Activated CD4-positive, alpha-beta memory T cell treated with anti-CD3 and anti-CD28 coated beads for 36 hours (primary cell): ENCODE measurements at regions of chr2 and their contacts with region 1.

Region 1: GRCh38 chr2:127387655-127388422 is at the start of gene MAP3K2:
- DNase-seq: peak; percentile 93
- H3K4me3 Mint-ChIP-seq: peak within 1 kb of the TSS; percentile 88
- H3K27ac Mint-ChIP-seq: peak within 1 kb of the TSS; percentile 96
- H3K4me1 Mint-ChIP-seq: peaks cover 72% of the 10 kb centered on the region
- H3K27me3 Mint-ChIP-seq: no peaks in the 10 kb centered on the region
- total RNA-seq, gene MAP3K2: 33.4 to 34.9 TPM

Region 2: GRCh38 chr2:127226520-127227263 is 161.1 kb before region 1 on chr2:
- CTCF ChIA-PET with region 1: no interaction called
- POLR2A ChIA-PET with region 1: no interaction called
- intact Hi-C with region 1: loop called (anchors 2 kb)
- DNase-seq: peak; percentile 87
- H3K4me3 Mint-ChIP-seq: peak overlapping the region; percentile 53
- H3K27ac Mint-ChIP-seq: peak overlapping the region; percentile 73
- H3K4me1 Mint-ChIP-seq: peaks cover 18% of the 10 kb centered on the region
- H3K27me3 Mint-ChIP-seq: peaks cover 40% of the 10 kb centered on the region

Region 3: DNA sequence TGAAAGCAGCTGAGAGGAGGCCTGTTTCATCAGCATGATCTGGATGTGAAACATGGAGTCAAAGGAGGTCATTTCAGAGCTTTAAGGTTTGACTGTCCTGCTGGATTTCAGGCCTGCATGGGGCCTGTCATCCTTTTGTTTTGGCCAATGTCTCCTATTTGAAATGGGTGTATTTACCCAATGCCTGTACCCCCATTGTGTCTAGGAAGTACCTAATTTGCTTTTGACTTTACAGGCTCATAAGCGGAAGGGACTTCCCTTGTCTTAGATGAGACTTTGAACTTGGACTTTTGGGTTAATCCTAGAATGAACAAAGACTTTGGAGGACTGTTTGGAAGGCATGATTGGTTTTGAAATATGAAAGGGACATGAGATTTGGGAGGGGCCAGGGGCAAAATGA is 148.4 kb before region 1 on chr2:
- CTCF ChIA-PET with region 1: no interaction called
- POLR2A ChIA-PET with region 1: no interaction called
- intact Hi-C with region 1: no loop called
- DNase-seq: no peak
- H3K4me3 Mint-ChIP-seq: no peak overlapping the region
- H3K27ac Mint-ChIP-seq: no peak overlapping the region
- H3K4me1 Mint-ChIP-seq: no peaks in the 10 kb centered on the region
- H3K27me3 Mint-ChIP-seq: no peaks in the 10 kb centered on the region

Region 4: DNA sequence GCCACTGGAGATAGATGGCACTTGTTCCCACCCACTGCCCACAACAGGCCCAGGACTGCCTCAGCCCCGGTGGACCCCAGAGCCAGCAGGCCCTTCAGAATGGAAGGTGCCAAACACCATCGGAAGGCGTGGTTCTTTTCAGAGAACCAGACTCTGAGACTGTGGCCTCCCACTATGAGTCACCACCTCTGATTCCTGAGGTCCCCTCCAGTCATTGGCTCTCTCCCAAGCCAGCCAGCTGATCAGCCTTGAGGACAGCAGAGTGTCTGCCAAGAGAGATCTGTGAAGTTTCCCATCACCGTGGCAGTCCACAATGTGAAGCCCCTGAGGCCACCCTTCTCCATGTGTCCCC is 10.4 kb after region 1 on chr2:
- CTCF ChIA-PET with region 1: no interaction called
- POLR2A ChIA-PET with region 1: interaction called, 9 read pairs
- intact Hi-C with region 1: loop called (anchors 1 kb)
- DNase-seq: peak; percentile 80
- H3K4me3 Mint-ChIP-seq: no peak overlapping the region
- H3K27ac Mint-ChIP-seq: peak overlapping the region; percentile 47
- H3K4me1 Mint-ChIP-seq: peaks cover 22% of the 10 kb centered on the region
- H3K27me3 Mint-ChIP-seq: peaks cover 5% of the 10 kb centered on the region

Region 5: GRCh38 chr2:127455566-127456493 is 68.0 kb after region 1 on chr2:
- CTCF ChIA-PET with region 1: no interaction called
- POLR2A ChIA-PET with region 1: no interaction called
- intact Hi-C with region 1: loop called (anchors 2 kb)
- DNase-seq: peak; percentile 60
- H3K4me3 Mint-ChIP-seq: peak overlapping the region; percentile 5
- H3K27ac Mint-ChIP-seq: peak overlapping the region; percentile 74
- H3K4me1 Mint-ChIP-seq: peaks cover 25% of the 10 kb centered on the region
- H3K27me3 Mint-ChIP-seq: peaks cover 3% of the 10 kb centered on the region

Region 6: GRCh38 chr2:127526149-127527000 is 138.5 kb after region 1 on chr2 and contains the start of gene IWS1:
- CTCF ChIA-PET with region 1: no interaction called
- POLR2A ChIA-PET with region 1: no interaction called
- intact Hi-C with region 1: loop called (anchors 1 kb)
- DNase-seq: peak; percentile 96
- H3K4me3 Mint-ChIP-seq: peak within 1 kb of the TSS; percentile 92
- H3K27ac Mint-ChIP-seq: peak within 1 kb of the TSS; percentile 90
- H3K4me1 Mint-ChIP-seq: peaks cover 34% of the 10 kb centered on the region
- H3K27me3 Mint-ChIP-seq: no peaks in the 10 kb centered on the region
- total RNA-seq, gene IWS1: 57.0 to 57.1 TPM

Region 7: GRCh38 chr2:127810619-127811396 is 423.0 kb after region 1 on chr2 and contains the start of gene WDR33:
- CTCF ChIA-PET with region 1: no interaction called
- POLR2A ChIA-PET with region 1: no interaction called
- intact Hi-C with region 1: loop called (anchors 5 kb)
- DNase-seq: peak; percentile 97
- H3K4me3 Mint-ChIP-seq: peak within 1 kb of the TSS; percentile 92
- H3K27ac Mint-ChIP-seq: peak within 1 kb of the TSS; percentile 98
- H3K4me1 Mint-ChIP-seq: peaks cover 42% of the 10 kb centered on the region
- H3K27me3 Mint-ChIP-seq: no peaks in the 10 kb centered on the region
- total RNA-seq, gene WDR33: 62.9 to 64.7 TPM